OCI-LY7 (cell line): ENCODE measurements at regions of chr20 and their contacts with region 1.

Region 1: DNA sequence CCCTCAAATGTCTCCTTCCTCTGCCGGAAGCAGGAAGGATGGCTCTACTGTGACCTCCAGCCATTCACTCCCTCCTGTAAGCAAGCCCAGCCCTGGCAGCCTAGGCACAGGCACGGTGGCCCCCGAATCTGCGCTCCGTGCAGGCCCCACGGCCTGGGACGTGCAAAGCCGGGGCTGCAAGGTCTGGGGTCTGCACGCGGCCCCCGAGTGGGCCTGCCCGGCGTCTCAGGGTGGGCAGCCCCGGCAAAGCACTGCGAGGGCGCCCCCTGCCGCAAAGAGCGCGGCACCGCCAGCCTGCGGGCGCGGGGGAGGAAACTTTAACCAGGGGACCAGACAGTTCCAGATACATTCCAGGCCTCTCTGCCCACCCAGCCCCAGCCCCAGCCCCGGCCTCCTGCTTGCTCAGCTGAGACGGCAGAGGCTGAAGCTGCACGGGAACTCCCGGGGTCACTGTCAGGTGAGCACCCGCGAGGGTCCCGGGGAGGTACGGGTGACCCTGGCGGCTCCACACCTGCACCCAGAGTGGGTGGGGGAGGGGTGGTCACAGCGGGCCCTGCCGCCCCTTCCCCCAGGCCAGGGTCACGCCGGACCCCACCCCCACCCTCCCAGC is 98.8 kb downstream of the ASXL1 start:
- DNase-seq: peak; percentile 66
- H3K4me3 ChIP-seq: peak overlapping the region; percentile 24
- H3K27ac ChIP-seq: no peak overlapping the region
- H3K4me1 ChIP-seq: peaks cover 5% of the 10 kb centered on the region
- CTCF ChIP-seq: peak; percentile 86

Region 2: GRCh38 chr20:31822421-31823330 is 634.3 kb before region 1 on chr20:
- CTCF ChIA-PET with region 1: no interaction called
- POLR2A ChIA-PET with region 1: no interaction called
- intact Hi-C with region 1: loop called (anchors 10 kb)
- DNase-seq: peak; percentile 72
- H3K4me3 ChIP-seq: no peak overlapping the region
- H3K27ac ChIP-seq: no peak overlapping the region
- H3K4me1 ChIP-seq: no peaks in the 10 kb centered on the region
- CTCF ChIP-seq: peak; percentile 98

Region 3: GRCh38 chr20:32155017-32155981 is 301.7 kb before region 1 on chr20:
- CTCF ChIA-PET with region 1: no interaction called
- POLR2A ChIA-PET with region 1: no interaction called
- intact Hi-C with region 1: loop called (anchors 2 kb)
- DNase-seq: peak; percentile 57
- H3K4me3 ChIP-seq: no peak overlapping the region
- H3K27ac ChIP-seq: no peak overlapping the region
- H3K4me1 ChIP-seq: no peaks in the 10 kb centered on the region
- CTCF ChIP-seq: peak; percentile 72

Region 4: DNA sequence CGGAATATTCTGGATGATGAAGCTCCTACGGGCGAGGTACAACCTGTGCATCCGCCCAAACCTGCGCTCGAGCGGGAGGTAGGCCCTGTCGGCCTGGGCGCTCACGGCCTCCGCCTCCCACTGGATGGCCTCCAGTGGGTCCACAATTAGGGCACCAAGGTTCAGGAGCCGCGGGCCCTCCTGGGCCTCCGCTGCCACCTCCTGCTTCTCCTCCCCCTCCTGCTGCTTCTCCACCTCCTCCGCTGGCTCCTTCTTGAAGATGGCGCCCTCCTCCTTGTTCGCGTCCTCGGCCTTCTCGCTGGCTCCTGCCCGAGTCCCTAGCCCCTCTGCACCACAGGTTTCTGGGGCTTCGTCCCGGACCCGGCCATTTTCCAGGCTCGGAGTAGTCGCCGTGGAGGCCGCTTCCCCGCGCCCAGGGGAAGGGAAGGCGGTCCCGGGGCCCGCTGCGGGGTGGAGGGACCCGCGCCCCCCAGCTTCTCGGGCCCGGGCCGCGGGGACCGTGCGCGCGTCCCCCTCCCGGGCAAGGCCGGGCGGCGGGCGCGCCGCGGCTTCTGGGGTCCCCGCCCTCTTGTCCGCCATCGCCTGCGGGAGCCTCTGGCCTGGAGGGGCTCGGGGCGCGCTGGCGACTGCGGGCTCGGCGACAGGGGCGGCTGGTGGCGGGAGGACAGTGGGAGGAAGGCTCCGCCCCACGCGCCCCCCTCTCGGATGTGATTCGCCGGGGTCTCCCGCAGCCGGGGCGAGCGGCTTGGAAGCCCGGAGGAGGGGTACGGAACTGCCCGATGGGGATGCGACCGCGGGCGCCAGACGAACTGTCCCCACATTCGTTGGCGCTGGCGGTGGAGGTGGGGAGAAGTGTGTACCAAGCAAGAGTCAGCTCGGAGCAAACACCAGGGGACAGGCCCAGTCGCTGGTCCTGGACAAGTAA is 267.0 kb before region 1 on chr20:
- CTCF ChIA-PET with region 1: no interaction called
- POLR2A ChIA-PET with region 1: no interaction called
- intact Hi-C with region 1: no loop called
- DNase-seq: no peak
- H3K4me3 ChIP-seq: no peak overlapping the region
- H3K27ac ChIP-seq: no peak overlapping the region
- H3K4me1 ChIP-seq: no peaks in the 10 kb centered on the region
- CTCF ChIP-seq: no peak

Region 5: DNA sequence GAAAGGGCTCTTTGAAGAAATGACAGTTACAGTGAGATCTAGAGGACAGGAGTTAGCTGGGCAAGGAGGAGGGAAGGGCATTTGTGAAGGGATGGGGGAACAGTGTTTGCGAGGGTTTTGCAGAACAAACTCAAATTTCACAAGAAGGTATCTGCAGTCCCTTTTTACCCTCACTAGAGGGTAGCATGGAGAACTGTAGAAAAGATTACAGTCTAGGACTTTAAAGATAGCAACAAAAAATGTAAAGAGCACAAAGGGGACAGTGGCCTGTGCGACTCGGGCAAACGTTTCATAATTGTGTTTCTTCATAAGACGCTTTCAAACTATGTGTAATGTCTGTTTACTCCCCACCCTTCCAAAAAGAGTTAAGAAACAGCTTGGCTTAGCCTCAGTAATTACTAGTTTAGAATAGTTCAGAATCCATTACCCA is 120.0 kb before region 1 on chr20:
- CTCF ChIA-PET with region 1: no interaction called
- POLR2A ChIA-PET with region 1: no interaction called
- intact Hi-C with region 1: loop called (anchors 2 kb)
- DNase-seq: peak; percentile 69
- H3K4me3 ChIP-seq: no peak overlapping the region
- H3K27ac ChIP-seq: no peak overlapping the region
- H3K4me1 ChIP-seq: peaks cover 8% of the 10 kb centered on the region
- CTCF ChIP-seq: peak; percentile 80

Region 6: DNA sequence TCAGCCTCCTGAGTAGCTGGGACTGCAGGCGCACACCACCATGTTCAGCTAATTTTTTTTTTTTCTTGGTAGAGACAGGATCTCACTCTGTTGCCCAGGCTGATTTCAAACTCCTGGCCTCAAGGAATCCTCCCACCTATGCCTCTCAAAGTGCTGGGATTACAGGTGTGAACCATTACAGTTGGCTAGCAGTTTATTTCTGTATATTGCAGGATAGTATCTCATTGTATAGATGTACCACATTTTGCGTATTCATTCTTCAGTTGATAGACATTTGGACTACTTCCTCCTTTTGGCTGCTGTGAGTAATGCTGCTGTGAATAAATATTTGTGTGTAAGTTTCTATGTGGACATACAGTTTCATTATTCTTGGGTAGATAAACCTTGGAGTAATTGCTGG is 66.0 kb before region 1 on chr20:
- CTCF ChIA-PET with region 1: no interaction called
- POLR2A ChIA-PET with region 1: no interaction called
- intact Hi-C with region 1: no loop called
- DNase-seq: no peak
- H3K4me3 ChIP-seq: no peak overlapping the region
- H3K27ac ChIP-seq: no peak overlapping the region
- H3K4me1 ChIP-seq: no peaks in the 10 kb centered on the region
- CTCF ChIP-seq: no peak

Region 7: DNA sequence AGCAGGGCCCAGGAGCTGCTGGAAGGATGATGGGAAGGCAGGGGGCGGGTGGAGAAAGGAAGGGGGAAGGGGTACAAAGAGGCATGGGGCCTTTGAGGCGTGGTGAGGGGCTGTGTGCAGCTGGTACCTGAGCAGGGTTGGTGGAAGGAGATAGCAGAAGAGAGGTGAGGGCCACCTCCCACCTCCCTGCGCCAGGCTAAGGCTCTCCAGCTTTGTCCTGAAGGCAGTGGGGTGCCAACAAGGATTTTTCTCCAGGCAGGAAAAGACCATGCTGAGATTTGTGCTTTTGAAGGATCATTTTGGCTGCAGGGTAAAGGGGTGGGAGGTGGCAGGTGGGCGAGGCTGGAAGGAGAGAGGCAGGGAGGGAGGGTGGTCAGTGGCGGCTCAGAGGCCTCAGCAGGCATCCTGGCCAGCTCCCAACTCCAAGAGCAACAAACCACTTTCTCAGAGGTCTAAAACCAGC is 87.3 kb after region 1 on chr20:
- CTCF ChIA-PET with region 1: interaction called, 15 read pairs
- POLR2A ChIA-PET with region 1: no interaction called
- intact Hi-C with region 1: no loop called
- DNase-seq: no peak
- H3K4me3 ChIP-seq: no peak overlapping the region
- H3K27ac ChIP-seq: no peak overlapping the region
- H3K4me1 ChIP-seq: peaks cover 11% of the 10 kb centered on the region
- CTCF ChIP-seq: no peak

Region 8: DNA sequence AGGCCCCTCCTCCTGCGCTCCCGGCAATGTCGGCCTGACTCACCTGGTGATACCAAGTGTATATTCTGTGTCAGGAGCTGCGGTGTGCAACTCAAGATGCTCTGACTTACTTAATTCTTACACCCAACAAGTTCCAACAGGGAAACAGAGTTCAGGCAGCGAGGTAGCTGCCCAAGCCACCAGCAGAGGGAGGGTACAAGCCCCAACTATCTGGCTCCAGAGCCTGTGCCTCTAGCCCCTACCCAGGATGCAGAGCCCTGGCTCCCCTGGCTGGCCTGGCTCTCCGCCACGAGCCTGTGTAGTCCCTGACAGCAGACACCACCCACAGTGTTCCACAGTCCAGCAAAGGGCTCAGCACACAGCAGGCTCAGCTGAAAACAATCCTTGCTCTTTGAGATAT is 181.9 kb after region 1 on chr20:
- CTCF ChIA-PET with region 1: no interaction called
- POLR2A ChIA-PET with region 1: no interaction called
- intact Hi-C with region 1: no loop called
- DNase-seq: no peak
- H3K4me3 ChIP-seq: no peak overlapping the region
- H3K27ac ChIP-seq: no peak overlapping the region
- H3K4me1 ChIP-seq: no peaks in the 10 kb centered on the region
- CTCF ChIP-seq: no peak